SK-N-SH (cell line): ENCODE measurements at regions of chr17 and their contacts with region 1.

Region 1: DNA sequence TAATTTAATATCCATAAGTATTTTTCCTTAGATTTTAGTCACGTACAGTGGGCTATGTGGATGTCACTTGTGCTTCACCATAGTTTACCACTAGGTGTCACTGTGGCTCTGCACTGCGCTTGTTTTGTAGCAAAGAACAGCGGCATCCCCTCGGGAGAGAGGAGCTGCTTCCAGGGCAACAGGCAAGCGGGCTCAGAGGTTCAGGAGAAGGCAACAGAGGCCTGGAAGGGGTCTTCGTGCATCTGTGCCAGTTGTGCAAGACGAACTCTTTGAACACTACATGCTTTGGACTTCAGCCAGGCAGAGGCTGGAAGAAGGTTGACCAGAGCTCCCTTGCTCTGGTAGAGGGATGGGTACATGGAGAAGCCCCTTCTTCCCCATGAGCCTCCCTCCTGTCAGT is 20.6 kb downstream of the CYB561 start:
- DNase-seq: peak; percentile 90
- H3K4me3 ChIP-seq: no peak overlapping the region; a peak in 1 of 4 replicates
- H3K27ac ChIP-seq: peak overlapping the region in 1 of 2 experiments; percentile 77; a peak in 2 of 4 replicates
- H3K4me1 ChIP-seq: peaks cover 0 to 48% of the 10 kb centered on the region in 2 experiments; a peak in 2 of 4 replicates
- H3K27me3 ChIP-seq: no peaks in the 10 kb centered on the region
- CTCF ChIP-seq: peak; percentile 100
- EP300 ChIP-seq: peak in 1 of 2 experiments; percentile 50; a peak in 1 of 4 replicates
- RAD21 ChIP-seq: peak; percentile 100

Region 2: GRCh38 chr17:62581764-62582163 is 843.7 kb before region 1 on chr17:
- CTCF ChIA-PET with region 1: no interaction called
- POLR2A ChIA-PET with region 1: no interaction called
- DNase-seq: no peak
- H3K4me3 ChIP-seq: no peak overlapping the region
- H3K27ac ChIP-seq: no peak overlapping the region
- H3K4me1 ChIP-seq: peaks cover 0 to 11% of the 10 kb centered on the region in 2 experiments; a peak in 2 of 4 replicates
- H3K27me3 ChIP-seq: no peaks in the 10 kb centered on the region
- CTCF ChIP-seq: no peak
- EP300 ChIP-seq: no peak
- RAD21 ChIP-seq: no peak

Region 3: DNA sequence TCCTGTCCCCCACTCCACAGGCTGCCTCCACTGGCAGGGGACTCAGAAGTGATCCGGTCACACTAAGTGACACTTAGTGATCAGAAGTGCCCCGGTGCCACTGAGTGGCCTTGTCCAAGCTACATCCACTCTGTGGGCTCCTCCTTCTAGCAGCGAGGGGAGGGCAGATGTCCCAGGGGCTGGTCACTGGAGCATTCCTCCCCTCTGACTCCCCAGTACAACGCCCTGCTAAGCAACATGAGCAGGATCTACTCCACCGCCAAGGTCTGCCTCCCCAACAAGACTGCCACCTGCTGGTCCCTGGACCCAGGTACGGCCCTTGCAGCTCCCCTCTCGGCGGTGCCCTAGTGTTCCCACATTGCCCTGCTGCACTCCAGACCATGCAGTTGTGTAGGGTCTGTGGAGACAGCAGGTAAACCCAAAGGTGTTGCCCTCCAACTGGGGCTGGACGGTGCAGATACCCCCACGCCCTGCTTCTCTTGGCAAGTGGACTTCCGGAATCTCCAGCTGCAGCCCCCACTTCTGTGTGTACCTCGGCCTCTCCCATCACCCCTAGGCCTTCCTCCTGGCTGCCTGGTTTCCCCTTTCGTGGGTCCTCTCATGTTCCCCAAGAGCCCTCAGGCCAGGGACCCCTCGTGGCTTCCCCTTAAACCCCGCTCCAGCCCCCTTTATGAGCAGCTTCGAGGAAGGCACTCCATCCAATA is 53.5 kb after region 1 on chr17:
- CTCF ChIA-PET with region 1: interaction called, 708 read pairs
- POLR2A ChIA-PET with region 1: interaction called, 193 read pairs
- DNase-seq: peak; percentile 94
- H3K4me3 ChIP-seq: no peak overlapping the region
- H3K27ac ChIP-seq: peak overlapping the region in 1 of 2 experiments; percentile 84; a peak in 2 of 4 replicates
- H3K4me1 ChIP-seq: peaks cover 9 to 67% of the 10 kb centered on the region in 2 experiments
- H3K27me3 ChIP-seq: no peaks in the 10 kb centered on the region
- CTCF ChIP-seq: peak; percentile 98
- EP300 ChIP-seq: no peak
- RAD21 ChIP-seq: peak; percentile 88

Region 4: DNA sequence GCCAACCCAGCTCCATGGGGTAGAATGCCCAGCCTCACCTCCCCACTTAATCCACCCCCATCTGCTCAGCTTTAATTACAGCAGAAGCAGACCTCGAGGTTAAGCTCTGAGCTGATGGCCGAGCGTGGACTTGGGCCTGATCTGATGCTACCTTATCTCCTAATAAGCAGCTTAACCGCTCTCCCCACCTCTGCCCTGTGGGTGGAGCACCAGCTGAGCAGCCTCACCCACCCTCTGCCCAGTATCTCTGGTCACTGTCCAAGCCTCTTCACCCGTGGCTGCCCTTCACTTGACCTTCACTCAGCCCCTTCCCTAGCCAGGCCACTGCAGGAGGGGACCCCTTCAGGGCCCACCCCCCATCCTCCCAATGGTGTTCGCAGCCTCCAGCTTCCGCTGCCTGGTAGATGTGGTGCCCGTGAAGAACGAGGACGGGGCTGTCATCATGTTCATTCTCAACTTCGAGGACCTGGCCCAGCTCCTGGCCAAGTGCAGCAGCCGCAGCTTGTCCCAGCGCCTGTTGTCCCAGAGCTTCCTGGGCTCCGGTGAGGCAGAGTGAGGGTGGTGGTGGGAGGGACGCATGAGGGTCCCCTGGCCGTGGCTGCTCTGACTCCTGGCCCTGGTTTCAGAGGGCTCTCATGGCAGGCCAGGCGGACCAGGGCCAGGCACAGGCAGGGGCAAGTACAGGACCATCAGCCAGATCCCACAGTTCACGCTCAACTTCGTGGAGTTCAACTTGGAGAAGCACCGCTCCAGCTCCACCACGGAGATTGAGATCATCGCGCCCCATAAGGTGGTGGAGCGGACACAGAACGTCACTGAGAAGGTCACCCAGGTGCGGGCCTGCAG is 104.5 kb after region 1 on chr17:
- CTCF ChIA-PET with region 1: interaction called, 27 read pairs
- POLR2A ChIA-PET with region 1: no interaction called
- DNase-seq: peak; percentile 74
- H3K4me3 ChIP-seq: no peak overlapping the region
- H3K27ac ChIP-seq: peak overlapping the region in 1 of 2 experiments; percentile 32; a peak in 1 of 4 replicates
- H3K4me1 ChIP-seq: peaks cover 0 to 29% of the 10 kb centered on the region in 2 experiments; a peak in 1 of 4 replicates
- H3K27me3 ChIP-seq: 0 out of 2 replicates have a peak, but pooled peaks cover 17% of the 10 kb centered on the region
- CTCF ChIP-seq: no peak
- EP300 ChIP-seq: no peak
- RAD21 ChIP-seq: 0 out of 2 replicates have a peak, but pooled peaks have one; percentile 9

Region 5: GRCh38 chr17:63571763-63572271 is 146.3 kb after region 1 on chr17:
- CTCF ChIA-PET with region 1: interaction called, 54 read pairs
- POLR2A ChIA-PET with region 1: interaction called, 5 read pairs
- DNase-seq: no peak
- H3K4me3 ChIP-seq: no peak overlapping the region
- H3K27ac ChIP-seq: peak overlapping the region in 1 of 2 experiments; percentile 71; a peak in 2 of 4 replicates
- H3K4me1 ChIP-seq: peaks cover 3 to 12% of the 10 kb centered on the region in 2 experiments; a peak in 3 of 4 replicates
- H3K27me3 ChIP-seq: no peaks in the 10 kb centered on the region
- CTCF ChIP-seq: no peak
- EP300 ChIP-seq: no peak
- RAD21 ChIP-seq: no peak

Region 6: DNA sequence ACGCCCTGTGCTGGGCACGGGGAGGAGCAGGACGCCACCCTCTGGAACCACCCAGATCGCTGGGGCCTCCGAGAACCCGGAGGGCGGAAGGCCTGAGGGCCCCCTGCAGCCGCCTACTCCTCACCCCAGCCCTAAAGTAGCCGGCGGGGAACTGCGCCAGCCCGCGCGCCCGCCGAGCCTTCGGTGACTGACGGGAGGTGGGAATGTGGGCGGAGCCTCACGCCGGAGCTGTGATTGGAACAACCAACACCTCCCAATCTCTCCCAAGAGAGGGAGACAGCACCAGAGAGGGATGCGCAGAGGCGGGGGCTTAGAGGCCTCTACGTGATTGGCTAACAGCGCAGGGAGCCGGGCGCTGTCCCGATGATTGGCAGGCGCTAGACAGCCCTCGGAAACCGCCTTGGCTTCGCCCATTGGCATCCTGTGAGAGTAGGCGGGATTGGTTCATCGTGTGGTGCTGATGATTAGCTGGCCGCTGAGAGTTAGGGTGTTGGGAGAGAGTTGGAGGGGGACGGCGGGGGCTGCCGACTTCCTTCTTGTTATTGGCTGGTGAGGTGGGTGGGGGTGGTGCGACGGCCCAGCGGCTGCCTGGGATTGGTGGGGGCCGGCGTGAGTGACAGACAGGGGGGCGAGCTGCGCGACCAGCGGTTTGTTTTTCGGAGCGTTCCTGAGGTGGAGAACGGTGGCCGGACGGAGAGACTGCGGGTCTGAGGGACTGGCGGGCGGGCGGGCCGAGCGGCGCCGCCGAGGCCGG is 196.5 kb after region 1 on chr17 and contains the start of gene MAP3K3:
- CTCF ChIA-PET with region 1: interaction called, 827 read pairs
- POLR2A ChIA-PET with region 1: interaction called, 9 read pairs
- DNase-seq: peak; percentile 99
- H3K4me3 ChIP-seq: peak within 1 kb of the TSS; percentile 79 to 87
- H3K27ac ChIP-seq: peak within 1 kb of the TSS; percentile 42 to 88; a peak in 3 of 4 replicates
- H3K4me1 ChIP-seq: peaks cover 13 to 14% of the 10 kb centered on the region in 2 experiments; a peak in 2 of 4 replicates
- H3K27me3 ChIP-seq: no peaks in the 10 kb centered on the region
- CTCF ChIP-seq: no peak; the same call in 1 of the 2 replicates
- EP300 ChIP-seq: peak in 1 of 2 experiments; percentile 29; a peak in 2 of 4 replicates
- RAD21 ChIP-seq: 0 out of 2 replicates have a peak, but pooled peaks have one; percentile 2
- polyA plus RNA-seq, gene MAP3K3: 25.3 and 26.5 TPM in 2 replicates

Region 7: DNA sequence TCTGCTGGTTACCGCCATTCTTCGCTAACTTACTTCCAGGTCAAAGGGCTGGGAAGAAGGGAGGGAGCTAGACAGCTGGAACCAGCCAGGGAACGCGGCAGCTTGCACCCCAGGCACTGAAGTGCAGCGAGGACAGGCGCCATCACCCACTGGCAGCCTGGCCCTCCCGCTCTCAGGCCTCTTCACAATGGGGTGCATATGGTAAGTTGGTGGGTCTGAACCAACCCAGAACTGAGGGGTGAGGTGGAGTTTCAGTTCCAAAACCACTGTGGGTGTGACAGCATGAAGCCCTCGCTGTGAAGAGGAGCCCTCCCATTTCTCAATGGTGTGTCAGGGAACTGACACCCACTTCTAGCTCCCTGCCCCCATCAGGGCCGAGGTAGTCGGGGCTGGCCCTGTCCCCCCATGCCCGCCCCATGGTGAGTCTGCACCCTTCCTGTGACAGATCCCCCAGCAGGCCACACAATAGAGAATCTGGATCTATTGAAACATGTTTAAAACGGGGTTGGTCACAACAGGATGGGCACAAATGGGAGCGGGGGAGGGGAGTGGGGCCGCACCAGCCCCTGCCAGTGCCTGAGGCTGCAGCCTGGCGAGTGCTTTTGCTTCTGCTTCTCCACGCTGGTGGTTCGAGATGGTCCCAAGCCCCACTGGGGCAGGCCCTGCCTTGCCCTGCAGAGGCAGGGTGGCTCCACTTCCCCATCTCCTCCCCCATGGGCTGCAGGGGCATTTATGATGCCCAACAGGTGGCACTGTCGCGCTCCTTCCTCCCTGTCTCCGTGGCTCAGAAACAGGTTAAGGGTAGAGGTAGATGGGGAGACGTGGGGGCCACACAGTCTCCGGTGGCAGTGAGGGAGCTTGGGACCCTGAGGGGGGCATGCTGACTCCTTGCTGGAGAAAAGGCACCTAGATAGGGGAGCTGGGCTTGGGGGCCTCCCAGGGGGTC is 272.1 kb after region 1 on chr17:
- CTCF ChIA-PET with region 1: interaction called, 60 read pairs
- POLR2A ChIA-PET with region 1: interaction called, 5 read pairs
- DNase-seq: peak; percentile 71
- H3K4me3 ChIP-seq: no peak overlapping the region; a peak in 1 of 4 replicates
- H3K27ac ChIP-seq: peak overlapping the region; percentile 25 to 98; a peak in 3 of 4 replicates
- H3K4me1 ChIP-seq: peaks cover 9 to 72% of the 10 kb centered on the region in 2 experiments; a peak in 3 of 4 replicates
- H3K27me3 ChIP-seq: no peaks in the 10 kb centered on the region
- CTCF ChIP-seq: peak; percentile 66
- EP300 ChIP-seq: no peak
- RAD21 ChIP-seq: peak; percentile 26; the same call in 1 of the 2 replicates